Endothelial cell of umbilical vein (primary cell): ENCODE measurements at regions of chr5 and their contacts with region 1.

Region 1: GRCh38 chr5:76715736-76716455 is at the start of gene F2R:
- DNase-seq: peak; percentile 94
- H3K4me3 ChIP-seq: peak within 1 kb of the TSS; percentile 81 to 100 (median 99)
- H3K27ac ChIP-seq: peak within 1 kb of the TSS; percentile 89
- H3K4me1 ChIP-seq: peaks cover 30% of the 10 kb centered on the region
- H3K27me3 ChIP-seq: no peaks in the 10 kb centered on the region
- CTCF ChIP-seq: peak; percentile 44 to 74
- POLR2A ChIP-seq: no peak
- total RNA-seq, gene F2R: 342 and 393 TPM in 2 replicates

Region 2: GRCh38 chr5:76556511-76557221 is 159.2 kb before region 1 on chr5:
- CTCF ChIA-PET with region 1: no interaction called
- POLR2A ChIA-PET with region 1: no interaction called
- dilution Hi-C with region 1: no loop called
- intact Hi-C with region 1: no loop called
- DNase-seq: no peak
- H3K4me3 ChIP-seq: no peak overlapping the region
- H3K27ac ChIP-seq: no peak overlapping the region
- H3K4me1 ChIP-seq: no peaks in the 10 kb centered on the region
- H3K27me3 ChIP-seq: peaks cover 2 to 3% of the 10 kb centered on the region in 2 experiments
- CTCF ChIP-seq: no peak
- POLR2A ChIP-seq: no peak

Region 3: DNA sequence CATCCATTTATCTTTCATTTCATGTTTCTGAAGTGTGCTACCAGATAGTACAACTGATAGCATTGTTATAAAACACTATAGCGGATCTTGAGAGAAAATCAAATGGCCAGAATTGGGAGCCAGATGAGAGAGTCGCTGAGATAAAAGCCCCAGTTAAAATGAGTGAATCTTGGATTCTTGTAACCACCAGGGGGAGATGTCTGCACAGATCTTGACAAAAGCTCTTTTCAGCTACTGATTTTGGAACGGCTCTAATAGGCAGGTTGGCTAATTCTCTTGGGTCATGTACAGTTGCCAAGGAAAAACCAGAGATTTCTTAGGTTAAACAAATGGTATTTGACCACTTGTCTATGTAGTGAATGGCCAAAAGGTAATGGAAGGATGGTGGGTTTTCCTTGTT is 114.4 kb before region 1 on chr5:
- CTCF ChIA-PET with region 1: interaction called, 44 read pairs
- POLR2A ChIA-PET with region 1: no interaction called
- dilution Hi-C with region 1: no loop called
- intact Hi-C with region 1: loop called (anchors 1 kb)
- DNase-seq: peak; percentile 78
- H3K4me3 ChIP-seq: no peak overlapping the region
- H3K27ac ChIP-seq: no peak overlapping the region
- H3K4me1 ChIP-seq: peaks cover 4% of the 10 kb centered on the region
- H3K27me3 ChIP-seq: peaks cover 0 to 2% of the 10 kb centered on the region in 2 experiments
- CTCF ChIP-seq: peak; percentile 52
- POLR2A ChIP-seq: no peak

Region 4: GRCh38 chr5:76641514-76642120 is 74.3 kb before region 1 on chr5:
- CTCF ChIA-PET with region 1: interaction called, 4 read pairs
- POLR2A ChIA-PET with region 1: interaction called, 3 read pairs
- dilution Hi-C with region 1: no loop called
- intact Hi-C with region 1: loop called (anchors 1 kb)
- DNase-seq: peak; percentile 85
- H3K4me3 ChIP-seq: no peak overlapping the region
- H3K27ac ChIP-seq: peak overlapping the region; percentile 84
- H3K4me1 ChIP-seq: peaks cover 34% of the 10 kb centered on the region
- H3K27me3 ChIP-seq: no peaks in the 10 kb centered on the region
- CTCF ChIP-seq: peak; percentile 66 to 72
- POLR2A ChIP-seq: no peak

Region 5: DNA sequence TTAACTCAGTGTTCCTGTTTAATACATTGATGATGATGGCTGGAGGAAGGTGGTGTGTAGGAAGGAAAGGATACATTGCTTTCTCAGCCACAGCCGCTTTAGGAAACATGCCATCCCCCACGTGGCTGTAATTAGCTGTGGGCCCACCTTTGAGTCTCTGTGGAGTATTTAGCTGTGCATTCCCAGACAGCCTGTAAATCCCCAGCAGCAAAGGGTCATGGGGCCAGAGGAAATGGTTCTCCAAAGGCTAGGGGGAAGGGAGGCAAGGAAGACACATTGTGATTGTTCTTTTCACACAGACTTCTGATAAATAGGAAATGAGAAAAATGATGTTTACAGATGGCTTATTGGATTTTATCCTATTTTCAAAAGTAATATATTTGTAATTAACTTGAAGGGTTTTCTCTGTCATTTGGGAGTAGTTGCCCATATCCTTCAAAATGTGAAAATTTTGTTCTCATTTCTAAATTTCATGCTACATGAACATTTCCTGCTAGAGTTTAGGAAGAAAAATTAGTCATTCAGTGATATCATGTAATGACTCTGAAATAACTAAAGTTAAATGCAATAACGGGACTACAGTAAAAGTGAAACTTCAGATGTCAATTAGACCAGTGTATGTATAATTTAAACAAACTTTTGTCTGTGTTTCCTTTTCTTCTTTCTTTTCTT is 24.3 kb before region 1 on chr5:
- CTCF ChIA-PET with region 1: interaction called, 10 read pairs
- POLR2A ChIA-PET with region 1: interaction called, 4 read pairs
- dilution Hi-C with region 1: no loop called
- intact Hi-C with region 1: loop called (anchors 1 kb)
- DNase-seq: peak; percentile 98
- H3K4me3 ChIP-seq: no peak overlapping the region
- H3K27ac ChIP-seq: peak overlapping the region; percentile 91
- H3K4me1 ChIP-seq: peaks cover 79% of the 10 kb centered on the region
- H3K27me3 ChIP-seq: no peaks in the 10 kb centered on the region
- CTCF ChIP-seq: no peak
- POLR2A ChIP-seq: peak; percentile 43

Region 6: GRCh38 chr5:76736679-76737556 is 21.0 kb after region 1 on chr5:
- CTCF ChIA-PET with region 1: interaction called, 4 read pairs
- POLR2A ChIA-PET with region 1: no interaction called
- dilution Hi-C with region 1: no loop called
- intact Hi-C with region 1: loop called (anchors 1 kb)
- DNase-seq: peak; percentile 40
- H3K4me3 ChIP-seq: no peak overlapping the region
- H3K27ac ChIP-seq: peak overlapping the region; percentile 40
- H3K4me1 ChIP-seq: peaks cover 23% of the 10 kb centered on the region
- H3K27me3 ChIP-seq: no peaks in the 10 kb centered on the region
- CTCF ChIP-seq: no peak
- POLR2A ChIP-seq: peak; percentile 52

Region 7: DNA sequence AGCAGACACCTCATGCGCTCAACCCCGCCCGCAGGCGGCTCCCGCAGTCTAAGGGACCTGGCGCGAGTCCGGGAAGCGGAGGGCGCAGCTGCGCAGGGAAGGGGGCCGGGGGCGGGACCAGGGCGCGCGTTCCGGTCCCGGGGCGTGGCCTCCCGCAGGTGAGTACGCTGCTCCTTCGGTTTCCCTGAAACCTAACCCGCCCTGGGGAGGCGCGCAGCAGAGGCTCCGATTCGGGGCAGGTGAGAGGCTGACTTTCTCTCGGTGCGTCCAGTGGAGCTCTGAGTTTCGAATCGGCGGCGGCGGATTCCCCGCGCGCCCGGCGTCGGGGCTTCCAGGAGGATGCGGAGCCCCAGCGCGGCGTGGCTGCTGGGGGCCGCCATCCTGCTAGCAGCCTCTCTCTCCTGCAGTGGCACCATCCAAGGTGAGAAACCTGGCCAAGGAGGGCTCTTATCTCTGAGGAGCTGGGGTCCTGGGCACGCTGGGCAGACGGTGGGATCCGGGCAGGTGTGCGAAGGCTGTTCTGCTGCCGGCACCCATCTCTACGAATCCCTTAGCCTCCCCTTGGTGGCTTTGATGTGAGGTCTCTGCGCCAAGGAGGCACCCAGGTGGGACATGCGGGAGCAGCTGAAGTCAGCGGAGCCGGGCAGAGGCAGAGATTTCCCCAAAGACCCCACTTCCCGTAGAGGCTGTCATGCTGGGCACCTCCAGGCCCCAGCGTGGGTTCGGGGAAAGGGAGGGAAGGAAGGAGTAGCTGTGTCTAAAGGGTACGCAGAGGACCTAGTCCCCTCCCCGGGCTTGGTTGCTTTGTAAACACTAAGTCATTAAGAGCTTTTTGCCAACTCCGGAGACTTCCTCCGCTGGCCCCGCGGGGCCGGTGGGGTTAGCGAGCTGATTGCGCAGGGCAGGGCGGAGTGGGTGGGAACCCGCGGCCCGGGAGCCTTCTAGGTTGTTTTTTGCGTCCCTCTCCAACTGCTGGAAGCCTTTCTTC is 103.2 kb after region 1 on chr5 and contains the start of gene F2RL1:
- CTCF ChIA-PET with region 1: no interaction called
- POLR2A ChIA-PET with region 1: no interaction called
- dilution Hi-C with region 1: no loop called
- intact Hi-C with region 1: loop called (anchors 5 kb)
- DNase-seq: peak; percentile 61
- H3K4me3 ChIP-seq: peak within 1 kb of the TSS; percentile 68 to 82 (median 80)
- H3K27ac ChIP-seq: peak within 1 kb of the TSS; percentile 75
- H3K4me1 ChIP-seq: peaks cover 21% of the 10 kb centered on the region
- H3K27me3 ChIP-seq: no peaks in the 10 kb centered on the region
- CTCF ChIP-seq: no peak
- POLR2A ChIP-seq: no peak
- total RNA-seq, gene F2RL1: 21.9 and 42.6 TPM in 2 replicates

Region 8: DNA sequence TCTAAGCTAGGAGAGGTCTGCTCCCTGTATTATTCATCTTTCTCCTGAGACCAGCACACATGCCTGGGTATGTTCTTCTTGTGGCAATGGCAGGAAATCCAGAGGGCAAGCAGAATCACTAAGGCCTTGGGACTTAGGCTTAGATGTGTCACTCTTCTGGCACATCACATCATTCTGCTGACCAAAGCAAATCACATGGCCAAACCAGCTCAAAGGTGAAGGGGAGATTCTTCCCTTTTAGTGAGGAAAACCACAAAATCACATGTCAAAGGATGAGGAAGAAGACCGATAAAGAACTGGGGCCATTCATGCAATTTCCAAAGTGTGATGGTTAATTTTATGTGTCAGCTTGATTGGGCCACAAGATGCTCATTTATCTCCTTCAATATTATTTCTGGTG is 308.6 kb after region 1 on chr5:
- CTCF ChIA-PET with region 1: no interaction called
- POLR2A ChIA-PET with region 1: no interaction called
- dilution Hi-C with region 1: no loop called
- intact Hi-C with region 1: no loop called
- DNase-seq: no peak
- H3K4me3 ChIP-seq: no peak overlapping the region
- H3K27ac ChIP-seq: no peak overlapping the region
- H3K4me1 ChIP-seq: no peaks in the 10 kb centered on the region
- H3K27me3 ChIP-seq: peaks cover 5 to 11% of the 10 kb centered on the region in 2 experiments
- CTCF ChIP-seq: no peak
- POLR2A ChIP-seq: no peak

Region 9: GRCh38 chr5:77491783-77492652 is 776.1 kb after region 1 on chr5 and contains the start of gene WDR41:
- CTCF ChIA-PET with region 1: no interaction called
- POLR2A ChIA-PET with region 1: no interaction called
- dilution Hi-C with region 1: no loop called
- intact Hi-C with region 1: loop called (anchors 5 kb)
- DNase-seq: peak; percentile 96
- H3K4me3 ChIP-seq: peak within 1 kb of the TSS; percentile 89 to 94 (median 90)
- H3K27ac ChIP-seq: peak within 1 kb of the TSS; percentile 79
- H3K4me1 ChIP-seq: peaks cover 9% of the 10 kb centered on the region
- H3K27me3 ChIP-seq: peaks cover 12 to 25% of the 10 kb centered on the region in 2 experiments
- CTCF ChIP-seq: peak; percentile 93 to 94
- POLR2A ChIP-seq: peak; percentile 54
- total RNA-seq, gene WDR41: 23.9 and 33.6 TPM in 2 replicates